Left lung (tissue), 14 donors: ENCODE measurements at regions of chrX and their contacts with region 1.

Region 1: DNA sequence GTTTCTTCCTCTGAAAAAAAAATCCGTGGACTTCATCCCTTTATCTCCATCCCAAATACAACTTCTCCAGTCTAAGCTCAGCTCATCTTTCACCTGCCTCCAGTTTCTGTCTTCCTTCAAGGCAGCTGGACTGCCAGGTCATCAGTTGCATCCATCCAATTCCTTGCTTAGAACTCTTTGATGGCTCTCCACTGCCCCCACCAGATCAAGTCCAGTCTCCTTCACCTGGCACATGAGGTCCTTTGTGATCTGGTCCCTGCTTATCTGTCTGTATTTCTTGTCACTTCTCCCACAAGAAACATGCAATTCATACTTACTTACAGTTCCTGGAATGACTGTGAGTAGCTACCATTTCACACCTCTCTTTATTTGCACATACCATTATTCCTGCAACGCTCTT is 33.8 kb downstream of the OTUD6A start:
- DNase-seq: no peak
- ATAC-seq: peak; percentile 27
- H3K4me3 ChIP-seq: no peak overlapping the region
- H3K27ac ChIP-seq: no peak overlapping the region
- H3K4me1 ChIP-seq: no peaks in the 10 kb centered on the region
- H3K27me3 ChIP-seq: no peaks in the 10 kb centered on the region
- CTCF ChIP-seq: no peak

Region 2: DNA sequence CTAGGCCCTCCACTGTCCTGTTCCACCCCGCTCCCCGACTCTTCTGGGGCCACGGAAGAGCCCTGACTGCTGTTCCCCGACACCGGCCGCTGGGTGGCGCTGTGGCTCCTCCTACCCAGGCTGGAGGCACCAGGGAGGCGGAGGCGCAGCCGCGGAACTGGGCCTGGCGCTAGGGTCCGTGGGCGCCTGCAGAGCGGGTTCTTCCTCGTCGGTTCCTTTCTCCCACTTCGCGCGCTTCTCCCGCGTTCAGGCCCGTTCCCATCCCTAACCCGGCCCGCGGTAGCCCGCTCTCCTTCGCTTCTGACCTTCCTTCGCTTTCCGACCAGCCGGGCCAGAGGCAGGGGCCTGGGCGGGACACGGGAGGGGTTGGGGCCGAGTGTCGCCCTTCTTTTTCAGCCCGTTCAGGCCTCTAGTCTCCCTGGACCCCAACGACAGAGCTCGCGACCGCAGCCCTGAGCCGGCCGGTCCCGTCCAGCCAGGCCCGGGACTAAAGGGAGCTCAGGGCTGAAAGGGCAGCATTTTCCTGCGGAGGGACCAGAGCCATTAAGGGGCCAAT is 557.7 kb before region 1 on chrX:
- intact Hi-C with region 1: loop called in 1 of 2 experiments (anchors 10 kb)
- DNase-seq: peak; percentile 57 to 87 (median 72)
- ATAC-seq: peak; percentile 98
- H3K4me3 ChIP-seq: peak overlapping the region in 1 of 2 donors; percentile 15
- H3K27ac ChIP-seq: no peak overlapping the region
- H3K4me1 ChIP-seq: no peaks in the 10 kb centered on the region
- H3K27me3 ChIP-seq: no peaks in the 10 kb centered on the region
- CTCF ChIP-seq: peak; percentile 57 to 66

Region 3: GRCh38 chrX:70039756-70040155 is 56.3 kb before region 1 on chrX:
- intact Hi-C with region 1: loop called in 1 of 2 experiments (anchors 5 kb)
- DNase-seq: no peak
- ATAC-seq: peak; percentile 15
- H3K4me3 ChIP-seq: no peak overlapping the region
- H3K27ac ChIP-seq: no peak overlapping the region
- H3K4me1 ChIP-seq: no peaks in the 10 kb centered on the region
- H3K27me3 ChIP-seq: no peaks in the 10 kb centered on the region
- CTCF ChIP-seq: no peak